ENCODE measurements at regions of chr2 and their contacts with region 1.

Region 1: DNA sequence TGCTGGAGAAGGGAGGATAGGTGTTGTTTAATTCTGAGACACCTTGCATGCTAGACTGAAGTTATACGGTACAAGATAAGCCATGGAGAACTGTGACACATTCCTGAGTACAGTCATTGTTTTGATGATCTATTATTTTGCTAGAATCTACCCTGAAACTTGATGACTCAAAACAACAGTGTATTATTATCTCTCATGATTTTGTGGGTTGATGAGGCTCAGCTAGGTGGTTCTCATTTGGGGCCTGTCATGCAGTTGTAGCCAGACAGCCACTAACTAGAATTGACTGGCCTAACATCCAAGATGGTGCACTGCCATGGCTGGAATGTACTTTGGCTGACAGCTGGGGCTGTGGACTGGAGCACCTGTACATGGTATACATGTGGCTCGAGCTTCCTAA is 5.4 kb upstream of the IL1R1 start:
- DNase-seq: no peak
- H3K4me3 ChIP-seq: no peak overlapping the region
- H3K27ac ChIP-seq: no peak overlapping the region
- H3K4me1 ChIP-seq: peaks cover 9% of the 10 kb centered on the region
- H3K27me3 ChIP-seq: no peaks in the 10 kb centered on the region
- CTCF ChIP-seq: no peak
- POLR2A ChIP-seq: no peak

Region 2: DNA sequence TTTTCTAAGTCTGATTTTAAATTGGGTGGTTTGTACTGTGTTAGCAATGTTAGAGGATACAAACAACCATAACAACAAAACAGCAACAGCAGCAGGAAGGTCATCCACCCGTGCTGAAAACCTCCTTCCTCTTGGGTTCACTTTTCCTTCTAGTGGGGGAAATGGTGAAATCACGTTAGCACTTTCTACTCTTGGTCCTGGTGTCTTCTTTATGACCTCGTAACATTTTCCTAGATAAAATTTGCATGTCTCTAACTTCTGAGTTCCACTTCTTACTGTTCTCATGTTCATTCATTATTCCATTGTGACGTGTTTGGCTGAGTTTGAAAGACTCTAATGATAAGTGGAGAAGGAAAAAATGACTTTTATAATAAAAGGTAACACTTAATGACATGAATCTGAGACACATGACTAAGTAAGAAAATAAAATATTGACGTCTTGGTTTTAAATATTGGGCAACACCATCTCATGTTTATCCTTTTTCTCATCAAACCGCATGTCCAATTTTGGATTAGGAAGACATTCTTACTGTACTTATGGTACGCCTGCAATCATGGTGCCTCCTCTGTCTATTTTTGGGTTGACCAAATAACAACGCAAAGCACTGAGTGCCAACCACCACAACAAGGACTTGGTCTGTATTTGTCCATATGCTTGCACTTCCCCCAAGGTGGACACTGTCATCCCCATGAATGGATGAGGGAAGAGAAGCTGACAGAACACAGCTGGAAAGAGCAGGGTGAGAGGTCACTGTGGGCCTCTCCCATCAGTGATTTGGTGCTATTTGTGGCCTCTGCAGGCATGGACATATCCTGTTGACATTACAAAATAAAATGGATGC is 20.3 kb before region 1 on chr2:
- CTCF ChIA-PET with region 1: interaction called, 15 read pairs
- POLR2A ChIA-PET with region 1: no interaction called
- dilution Hi-C with region 1: no loop called
- intact Hi-C with region 1: no loop called
- DNase-seq: no peak
- H3K4me3 ChIP-seq: no peak overlapping the region
- H3K27ac ChIP-seq: no peak overlapping the region
- H3K4me1 ChIP-seq: peaks cover 4% of the 10 kb centered on the region
- H3K27me3 ChIP-seq: no peaks in the 10 kb centered on the region
- CTCF ChIP-seq: no peak
- POLR2A ChIP-seq: no peak

Region 3: DNA sequence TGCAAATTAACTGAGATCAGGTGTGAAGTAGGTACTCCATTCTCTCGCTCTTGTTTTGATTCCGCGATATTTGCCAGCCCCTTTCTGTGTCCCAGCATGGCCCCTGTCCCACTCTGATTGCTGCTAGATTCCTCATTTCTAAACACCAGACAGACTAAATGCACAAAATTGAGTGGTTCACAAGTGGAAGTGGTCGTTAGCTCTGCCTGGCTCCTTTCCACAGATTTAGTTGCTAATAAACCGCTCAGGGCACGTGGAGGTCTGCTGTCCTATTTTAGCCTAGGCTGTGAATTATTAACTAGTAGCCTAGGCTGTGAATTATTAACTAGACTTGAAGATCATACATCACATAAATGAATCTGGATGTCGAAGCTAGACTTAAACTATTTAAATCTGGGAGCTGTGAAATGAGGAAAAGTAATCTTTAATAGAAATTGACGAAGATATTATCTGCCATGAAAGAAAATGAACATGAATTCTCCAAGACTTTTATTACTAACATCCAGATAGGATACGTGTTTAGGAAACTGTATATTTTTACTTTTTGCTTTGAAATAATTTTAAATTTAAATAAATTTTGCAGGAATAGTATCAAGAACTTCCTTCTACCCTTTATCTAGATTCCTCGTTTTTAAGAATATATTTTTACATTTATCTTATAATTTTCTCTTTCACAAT is 53.4 kb after region 1 on chr2:
- CTCF ChIA-PET with region 1: no interaction called
- POLR2A ChIA-PET with region 1: no interaction called
- dilution Hi-C with region 1: no loop called
- intact Hi-C with region 1: no loop called
- DNase-seq: no peak
- H3K4me3 ChIP-seq: no peak overlapping the region
- H3K27ac ChIP-seq: no peak overlapping the region
- H3K4me1 ChIP-seq: peaks cover 10% of the 10 kb centered on the region
- H3K27me3 ChIP-seq: no peaks in the 10 kb centered on the region
- CTCF ChIP-seq: no peak
- POLR2A ChIP-seq: no peak

Region 4: DNA sequence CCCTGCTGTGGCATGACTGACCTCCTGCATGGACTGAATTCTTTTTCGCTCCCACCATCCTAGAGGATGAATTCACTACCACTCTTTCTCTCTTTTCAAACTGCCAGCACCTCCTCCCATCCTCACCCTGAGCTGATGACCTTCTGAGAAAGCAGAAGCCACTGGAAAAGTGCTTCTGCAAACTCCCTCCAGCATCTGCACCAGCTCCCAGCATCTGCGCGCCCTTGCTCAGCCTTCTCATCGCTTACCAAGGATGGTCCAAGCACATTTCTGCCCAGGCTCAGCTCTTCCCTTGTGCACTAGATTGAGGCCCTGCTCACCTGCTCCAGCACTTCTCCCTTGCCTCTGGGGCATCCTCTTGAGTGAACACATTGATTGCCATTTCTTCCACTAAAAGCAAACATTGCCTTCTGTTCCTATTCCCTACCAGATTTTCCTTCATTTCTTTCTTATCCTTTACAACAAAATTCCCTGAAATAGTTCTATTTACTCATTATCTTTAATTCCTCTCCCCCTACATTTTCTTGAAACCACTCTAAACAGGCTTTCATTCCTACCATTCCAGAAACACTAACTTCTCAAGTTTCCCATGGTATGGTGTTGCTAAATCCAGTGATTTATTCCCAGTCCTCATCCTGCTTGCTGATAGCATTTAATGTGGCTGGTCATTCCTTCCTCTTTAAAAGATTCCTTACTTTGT is 131.5 kb after region 1 on chr2:
- CTCF ChIA-PET with region 1: no interaction called
- POLR2A ChIA-PET with region 1: no interaction called
- dilution Hi-C with region 1: no loop called
- intact Hi-C with region 1: no loop called
- DNase-seq: no peak
- H3K4me3 ChIP-seq: no peak overlapping the region
- H3K27ac ChIP-seq: no peak overlapping the region
- H3K4me1 ChIP-seq: peaks cover 3% of the 10 kb centered on the region
- H3K27me3 ChIP-seq: no peaks in the 10 kb centered on the region
- CTCF ChIP-seq: no peak
- POLR2A ChIP-seq: no peak

Measured in endothelial cell of umbilical vein (primary cell).